ENCODE measurements at regions of chr1 and their contacts with region 1.

Region 1: DNA sequence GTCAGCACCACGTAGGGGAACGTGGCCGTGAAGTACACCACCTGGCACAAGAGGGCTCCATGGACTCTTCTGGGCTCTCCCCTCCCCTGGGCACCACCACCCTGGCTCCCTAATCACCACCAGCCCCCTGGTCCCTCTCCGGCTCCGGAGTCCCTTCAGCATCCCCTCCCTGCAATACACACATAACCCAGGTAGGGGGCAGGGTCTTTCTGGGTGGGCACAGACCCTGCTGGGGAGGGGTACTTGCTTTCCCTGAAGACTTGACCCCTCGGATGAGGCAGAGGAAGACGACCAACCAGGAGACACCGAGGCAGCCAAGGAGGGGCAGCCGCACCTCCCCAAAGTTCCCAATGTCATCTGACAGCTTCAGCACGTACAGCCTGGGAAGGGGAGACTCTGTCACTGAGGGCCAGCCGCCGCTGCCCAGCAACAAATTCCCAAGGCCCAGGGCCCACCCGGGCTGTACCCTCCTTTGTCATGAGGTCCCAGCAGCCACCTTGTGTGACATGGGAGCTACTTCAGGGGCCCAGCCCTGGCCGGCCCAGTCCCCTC is 11.3 kb downstream of the CCDC24 start:
- DNase-seq: no peak
- ATAC-seq: no peak
- H3K4me3 ChIP-seq: no peak overlapping the region
- H3K27ac ChIP-seq: no peak overlapping the region
- H3K4me1 ChIP-seq: no peaks in the 10 kb centered on the region
- H3K27me3 ChIP-seq: no peaks in the 10 kb centered on the region
- CTCF ChIP-seq: no peak
- POLR2A ChIP-seq: no peak

Region 2: DNA sequence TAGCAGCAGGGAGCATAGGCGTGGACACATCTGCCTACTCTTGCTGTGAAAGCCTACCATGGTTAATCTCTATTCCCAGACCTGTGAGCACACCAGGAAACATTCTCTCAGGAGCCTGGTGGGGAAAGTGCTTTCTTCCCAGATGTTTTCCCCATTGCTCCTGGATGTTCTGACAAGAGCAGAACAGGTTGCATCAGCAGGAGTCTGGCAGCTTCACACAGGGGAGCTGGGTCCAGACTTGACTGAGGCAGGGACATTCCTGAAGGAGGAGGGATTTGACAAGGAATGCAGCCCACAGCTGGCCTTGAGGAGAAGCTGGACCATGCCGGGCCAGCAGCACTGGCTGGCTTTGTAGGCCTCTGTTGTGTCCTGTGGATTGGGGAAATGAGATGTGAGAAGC is 90.1 kb before region 1 on chr1:
- in situ Hi-C with region 1: no loop called
- intact Hi-C with region 1: no loop called
- DNase-seq: peak in 1 of 2 donors; percentile 33
- ATAC-seq: peak; percentile 31 to 34
- H3K4me3 ChIP-seq: no peak overlapping the region
- H3K27ac ChIP-seq: no peak overlapping the region
- H3K4me1 ChIP-seq: peaks cover 0 to 5% of the 10 kb centered on the region in 2 donors
- H3K27me3 ChIP-seq: no peaks in the 10 kb centered on the region
- CTCF ChIP-seq: no peak
- POLR2A ChIP-seq: no peak

Region 3: GRCh38 chr1:44036409-44037139 is 33.9 kb after region 1 on chr1:
- in situ Hi-C with region 1: loop called in 2 of 4 experiments (anchors 5 to 10 kb)
- intact Hi-C with region 1: loop called (anchors 1 kb)
- DNase-seq: peak; percentile 39 to 59
- ATAC-seq: peak; percentile 69 to 73
- H3K4me3 ChIP-seq: no peak overlapping the region
- H3K27ac ChIP-seq: peak overlapping the region in 2 of 4 donors; percentile 34 to 51
- H3K4me1 ChIP-seq: peaks cover 17% of the 10 kb centered on the region in 2 donors
- H3K27me3 ChIP-seq: no peaks in the 10 kb centered on the region
- CTCF ChIP-seq: peak; percentile 70 to 82 (median 80)
- POLR2A ChIP-seq: no peak

Region 4: GRCh38 chr1:44049839-44050238 is 47.2 kb after region 1 on chr1:
- in situ Hi-C with region 1: loop called in 3 of 4 experiments (anchors 5 to 10 kb)
- intact Hi-C with region 1: loop called (anchors 1 kb)
- DNase-seq: no peak
- ATAC-seq: no peak
- H3K4me3 ChIP-seq: no peak overlapping the region
- H3K27ac ChIP-seq: no peak overlapping the region
- H3K4me1 ChIP-seq: no peaks in the 10 kb centered on the region
- H3K27me3 ChIP-seq: no peaks in the 10 kb centered on the region
- CTCF ChIP-seq: no peak
- POLR2A ChIP-seq: no peak

Region 5: DNA sequence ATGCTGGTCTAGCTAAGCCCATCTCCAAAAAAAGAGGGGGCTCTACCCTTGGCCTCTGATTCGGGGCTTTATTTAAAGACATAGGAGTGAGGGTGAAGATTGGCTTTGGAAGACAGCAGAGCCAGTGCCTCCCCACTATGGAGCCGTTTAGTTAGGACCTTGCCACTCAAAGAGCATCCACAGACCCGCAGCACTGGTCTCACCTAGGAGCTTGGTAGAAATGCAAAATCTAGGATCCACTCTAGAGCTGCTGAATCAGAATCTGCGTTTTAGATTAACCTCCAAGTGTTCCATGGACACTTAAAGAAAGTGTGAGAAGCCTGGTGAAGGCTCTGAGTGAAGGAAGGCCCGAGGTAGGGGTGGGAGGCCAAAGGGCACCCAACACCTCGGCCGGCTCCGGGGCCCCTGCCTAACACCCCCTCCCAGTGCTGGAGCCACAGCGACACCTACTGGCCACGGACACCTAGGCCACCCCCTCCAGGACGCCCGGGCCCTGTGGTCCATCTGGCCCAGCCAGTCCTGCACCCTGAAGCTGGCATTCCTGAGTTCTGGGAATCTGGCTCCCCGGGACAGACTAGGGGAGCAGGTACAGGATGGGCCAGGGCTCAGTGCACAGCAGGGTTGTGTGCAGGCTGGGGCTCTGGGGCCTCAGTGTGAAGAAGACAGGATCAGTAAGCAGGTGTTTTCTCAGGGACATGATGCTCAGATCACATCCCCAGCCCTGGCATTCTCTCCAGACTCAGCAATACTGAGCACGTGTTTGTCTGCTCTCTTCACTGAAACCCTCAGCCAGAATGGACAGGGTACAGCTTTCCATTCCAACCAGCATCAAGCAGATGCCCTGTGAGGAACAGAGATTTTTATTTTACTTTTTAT is 592.4 kb after region 1 on chr1:
- in situ Hi-C with region 1: no loop called
- intact Hi-C with region 1: loop called (anchors 10 kb)
- DNase-seq: peak; percentile 54
- ATAC-seq: peak; percentile 55 to 77
- H3K4me3 ChIP-seq: no peak overlapping the region
- H3K27ac ChIP-seq: no peak overlapping the region
- H3K4me1 ChIP-seq: no peaks in the 10 kb centered on the region
- H3K27me3 ChIP-seq: peaks cover 0 to 10% (median 0%) of the 10 kb centered on the region in 3 donors
- CTCF ChIP-seq: peak; percentile 83 to 97 (median 93)
- POLR2A ChIP-seq: no peak